Activated CD4-positive, alpha-beta T cell treated with anti-CD3 and anti-CD28 coated beads, Interleukin-2, amount 10 ng/mL, durations not matched to agents 24 days and 14 days (primary cell): ENCODE measurements at regions of chr5 and their contacts with region 1.

Region 1: DNA sequence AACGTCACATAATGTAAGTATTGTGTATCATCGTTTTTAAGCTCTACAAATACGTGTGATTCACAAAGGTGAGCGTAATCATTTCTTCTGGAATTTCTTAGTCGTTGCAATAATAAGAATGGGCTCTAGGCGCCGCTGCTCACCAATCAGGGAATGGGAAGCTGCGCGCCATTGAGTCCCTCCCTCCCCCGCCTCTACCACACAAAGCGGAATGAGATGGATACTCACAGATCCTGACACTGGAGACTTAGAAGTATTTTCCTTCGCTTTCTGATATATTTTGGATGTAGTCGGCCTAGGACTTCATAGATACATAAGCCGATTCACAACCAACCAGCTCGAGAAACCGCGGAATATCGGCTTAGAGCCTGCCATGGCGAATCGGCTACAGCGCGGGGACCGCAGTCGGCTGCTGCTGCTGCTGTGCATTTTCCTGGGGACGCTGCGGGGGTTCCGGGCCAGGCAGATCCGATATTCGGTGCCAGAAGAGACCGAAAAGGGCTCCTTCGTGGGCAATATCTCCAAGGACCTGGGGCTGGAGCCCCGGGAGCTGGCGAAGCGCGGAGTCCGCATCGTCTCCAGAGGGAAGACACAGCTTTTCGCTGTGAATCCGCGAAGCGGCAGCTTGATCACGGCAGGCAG is at the start of gene PCDHGA11:
- DNase-seq: peak; percentile 85
- H3K4me3 Mint-ChIP-seq: peak within 1 kb of the TSS; percentile 84
- H3K27ac Mint-ChIP-seq: peak within 1 kb of the TSS; percentile 30
- H3K4me1 Mint-ChIP-seq: peaks cover 18% of the 10 kb centered on the region
- H3K27me3 Mint-ChIP-seq: peaks cover 53% of the 10 kb centered on the region
- total RNA-seq, gene PCDHGA11: 0.23 and 0.31 TPM in 2 replicates

Region 2: GRCh38 chr5:141475625-141476131 is 54.7 kb after region 1 on chr5 and contains the start of gene PCDHGC3:
- intact Hi-C with region 1: loop called (anchors 5 kb)
- DNase-seq: peak; percentile 78
- H3K4me3 Mint-ChIP-seq: peak within 1 kb of the TSS; percentile 91
- H3K27ac Mint-ChIP-seq: no peak within 1 kb of the TSS
- H3K4me1 Mint-ChIP-seq: peaks cover 18% of the 10 kb centered on the region
- H3K27me3 Mint-ChIP-seq: peaks cover 60% of the 10 kb centered on the region
- total RNA-seq, gene PCDHGC3: 0.24 and 0.58 TPM in 2 replicates

Region 3: GRCh38 chr5:141524604-141525597 is 103.9 kb after region 1 on chr5:
- intact Hi-C with region 1: loop called (anchors 2 kb)
- DNase-seq: peak; percentile 85
- H3K4me3 Mint-ChIP-seq: no peak overlapping the region
- H3K27ac Mint-ChIP-seq: peak overlapping the region; percentile 10
- H3K4me1 Mint-ChIP-seq: peaks cover 29% of the 10 kb centered on the region
- H3K27me3 Mint-ChIP-seq: no peaks in the 10 kb centered on the region